Breast epithelium (tissue), 4 donors: ENCODE measurements at regions of chr5 and their contacts with region 1.

Region 1: DNA sequence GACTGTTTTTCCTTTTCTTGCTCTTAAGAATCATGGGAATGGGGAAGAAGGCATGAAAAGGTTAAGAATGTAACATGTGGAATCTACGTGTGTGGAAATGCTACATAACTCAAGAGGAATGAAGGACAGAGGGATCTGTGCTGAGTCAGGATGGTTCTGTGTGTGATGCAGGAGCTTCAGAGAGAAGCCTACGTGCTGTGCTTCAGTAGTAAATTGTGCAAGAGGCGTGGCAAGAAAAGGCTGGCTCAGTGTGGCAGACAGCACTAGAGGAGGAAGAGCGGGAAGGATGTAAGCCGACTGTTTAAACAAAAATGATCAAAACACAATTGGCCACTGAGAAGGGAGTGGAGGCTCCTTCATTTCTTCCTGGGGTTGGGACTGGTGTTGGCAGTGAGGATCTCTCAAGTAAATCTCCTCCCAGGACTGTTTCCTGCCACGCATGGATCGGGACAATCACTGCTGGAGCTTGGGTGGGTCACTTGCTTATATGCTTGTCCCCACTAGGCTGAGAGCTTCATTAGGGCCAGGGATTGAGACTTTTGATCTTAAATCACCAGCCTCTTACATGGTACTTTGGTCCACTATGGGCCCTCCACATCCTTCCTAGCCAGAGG is 59.4 kb upstream of the BASP1 start:
- DNase-seq: no peak
- H3K4me3 ChIP-seq: no peak overlapping the region
- H3K27ac ChIP-seq: no peak overlapping the region
- H3K4me1 ChIP-seq: no peaks in the 10 kb centered on the region
- H3K27me3 ChIP-seq: no peaks in the 10 kb centered on the region
- CTCF ChIP-seq: no peak
- POLR2A ChIP-seq: no peak

Region 2: GRCh38 chr5:16378762-16379161 is 779.3 kb before region 1 on chr5:
- intact Hi-C with region 1: loop called (anchors 5 kb)
- DNase-seq: no peak
- H3K4me3 ChIP-seq: no peak overlapping the region
- H3K27ac ChIP-seq: no peak overlapping the region
- H3K4me1 ChIP-seq: no peaks in the 10 kb centered on the region
- H3K27me3 ChIP-seq: no peaks in the 10 kb centered on the region
- CTCF ChIP-seq: no peak
- POLR2A ChIP-seq: no peak

Region 3: GRCh38 chr5:16531063-16531648 is 626.9 kb before region 1 on chr5:
- intact Hi-C with region 1: loop called (anchors 5 kb)
- DNase-seq: no peak
- H3K4me3 ChIP-seq: no peak overlapping the region
- H3K27ac ChIP-seq: no peak overlapping the region
- H3K4me1 ChIP-seq: no peaks in the 10 kb centered on the region
- H3K27me3 ChIP-seq: no peaks in the 10 kb centered on the region
- CTCF ChIP-seq: no peak
- POLR2A ChIP-seq: no peak

Region 4: DNA sequence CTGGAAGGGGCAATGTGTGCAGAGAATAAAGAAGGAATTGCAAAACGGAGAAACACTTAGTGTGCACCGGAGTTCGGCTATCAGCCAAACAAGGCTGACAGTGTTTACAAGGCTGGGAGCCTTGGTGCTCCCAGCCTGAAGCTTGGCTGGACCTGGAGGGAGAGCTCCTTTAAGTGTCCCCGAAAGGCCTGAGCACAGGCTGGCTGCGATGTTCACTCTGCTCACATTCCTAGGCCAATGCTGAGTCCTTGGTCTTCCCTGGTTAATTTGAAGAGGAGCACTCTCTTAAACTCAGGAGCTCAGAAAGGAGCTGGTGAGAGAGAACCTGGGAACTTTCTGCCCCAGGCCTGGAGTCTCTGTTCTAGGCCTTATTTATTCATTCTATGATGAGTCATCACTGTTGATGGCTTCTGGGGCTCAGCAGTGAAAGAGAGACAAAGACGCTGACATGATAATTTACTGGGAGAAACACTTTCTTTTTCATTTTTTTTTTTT is 133.3 kb before region 1 on chr5:
- intact Hi-C with region 1: no loop called
- DNase-seq: no peak
- H3K4me3 ChIP-seq: no peak overlapping the region
- H3K27ac ChIP-seq: no peak overlapping the region
- H3K4me1 ChIP-seq: no peaks in the 10 kb centered on the region
- H3K27me3 ChIP-seq: no peaks in the 10 kb centered on the region
- CTCF ChIP-seq: no peak
- POLR2A ChIP-seq: no peak